ENCODE measurements at regions of chr6 and their contacts with region 1.

Region 1: GRCh38 chr6:130885392-130886192 is 58.4 kb downstream of the SMLR1 start:
- DNase-seq: peak; percentile 77
- H3K4me3 ChIP-seq: no peak overlapping the region
- H3K27ac ChIP-seq: no peak overlapping the region
- H3K4me1 ChIP-seq: peaks cover 0 to 8% (median under 1%) of the 10 kb centered on the region in 4 donors
- H3K27me3 ChIP-seq: no peaks in the 10 kb centered on the region
- CTCF ChIP-seq: peak; percentile 82 to 95 (median 90)
- EP300 ChIP-seq: no peak
- POLR2A ChIP-seq: no peak

Region 2: DNA sequence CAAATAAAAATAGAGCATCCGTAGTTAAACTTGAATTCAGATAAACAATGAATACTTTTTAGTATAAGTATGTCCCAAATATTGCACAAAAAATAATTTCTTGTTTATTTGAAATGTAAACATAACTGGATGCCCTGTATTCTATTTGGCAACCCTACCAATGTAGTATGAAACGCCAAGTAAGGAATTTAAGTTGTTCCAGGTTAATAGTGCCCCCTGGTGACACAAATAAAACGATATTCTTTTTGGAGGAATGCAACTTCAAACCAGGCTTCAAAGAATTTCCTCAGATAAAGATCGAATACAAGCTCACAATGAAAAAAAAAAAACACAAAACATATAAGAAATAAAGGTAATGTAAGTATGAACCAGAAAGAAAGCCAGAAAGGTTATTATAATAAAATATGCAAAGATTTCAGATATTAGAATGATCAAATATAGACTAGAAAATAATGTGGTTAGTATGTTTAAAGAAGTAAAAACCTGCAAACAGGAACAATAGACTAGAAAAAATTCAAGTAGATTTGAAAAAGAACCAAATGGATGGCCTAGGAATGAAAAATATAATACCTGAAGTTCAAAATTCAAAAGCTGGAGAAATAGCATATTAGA is 231.3 kb after region 1 on chr6:
- in situ Hi-C with region 1: loop called (anchors 5 to 10 kb)
- intact Hi-C with region 1: loop called (anchors 2 kb)
- DNase-seq: no peak
- H3K4me3 ChIP-seq: no peak overlapping the region
- H3K27ac ChIP-seq: no peak overlapping the region
- H3K4me1 ChIP-seq: peaks cover 0 to 10% (median 0%) of the 10 kb centered on the region in 4 donors
- H3K27me3 ChIP-seq: no peaks in the 10 kb centered on the region
- CTCF ChIP-seq: peak; percentile 49 to 74 (median 59)
- EP300 ChIP-seq: no peak
- POLR2A ChIP-seq: no peak

Region 3: DNA sequence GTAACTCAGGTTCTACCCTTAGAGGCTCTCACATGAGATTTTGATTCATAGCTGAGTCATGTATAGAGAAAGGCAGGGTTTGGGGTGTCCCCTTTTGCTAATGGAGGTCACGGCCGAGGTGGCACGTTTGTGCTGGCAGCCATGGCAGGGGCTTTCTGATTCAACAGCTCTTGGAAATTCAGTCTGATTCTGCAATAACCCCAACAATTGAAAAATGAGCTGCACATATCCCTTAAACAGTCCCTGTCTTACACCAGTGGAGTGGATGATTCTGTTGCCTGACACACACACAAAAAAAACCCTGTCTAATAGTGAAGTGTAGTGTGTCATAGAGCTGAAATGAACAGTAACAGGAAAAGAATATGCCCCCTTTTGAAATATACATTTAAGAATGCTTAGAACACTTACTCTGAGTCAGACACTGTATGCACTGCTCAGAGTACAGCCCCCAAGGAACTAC is 647.0 kb after region 1 on chr6:
- in situ Hi-C with region 1: loop called in 3 of 4 experiments (anchors 10 to 25 kb)
- intact Hi-C with region 1: no loop called
- DNase-seq: no peak
- H3K4me3 ChIP-seq: no peak overlapping the region
- H3K27ac ChIP-seq: no peak overlapping the region
- H3K4me1 ChIP-seq: peaks cover 0 to 7% (median 0%) of the 10 kb centered on the region in 4 donors
- H3K27me3 ChIP-seq: no peaks in the 10 kb centered on the region
- CTCF ChIP-seq: no peak
- EP300 ChIP-seq: no peak
- POLR2A ChIP-seq: no peak

Region 4: DNA sequence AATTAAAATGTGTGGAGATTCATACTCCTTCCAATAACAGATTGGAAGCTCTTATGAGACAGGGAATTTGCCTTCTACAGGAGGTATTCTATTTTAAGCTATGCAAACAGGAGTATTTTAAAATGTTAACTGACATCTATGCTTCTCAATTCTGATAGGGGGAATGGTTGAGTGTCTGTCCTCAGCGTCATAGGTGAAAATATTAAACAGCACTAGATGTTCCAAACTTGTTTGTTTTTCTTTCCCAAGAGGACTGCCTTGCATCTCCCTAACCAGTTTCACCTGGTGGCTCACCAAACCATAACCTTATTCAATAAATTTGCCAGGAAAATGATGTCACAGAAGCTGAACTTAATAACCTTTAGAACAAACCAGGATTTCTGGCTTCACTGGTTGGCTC is 662.8 kb after region 1 on chr6:
- in situ Hi-C with region 1: loop called in 3 of 4 experiments (anchors 10 to 25 kb)
- intact Hi-C with region 1: no loop called
- DNase-seq: no peak
- H3K4me3 ChIP-seq: no peak overlapping the region
- H3K27ac ChIP-seq: no peak overlapping the region
- H3K4me1 ChIP-seq: no peaks in the 10 kb centered on the region
- H3K27me3 ChIP-seq: no peaks in the 10 kb centered on the region
- CTCF ChIP-seq: no peak
- EP300 ChIP-seq: no peak
- POLR2A ChIP-seq: no peak

Region 5: DNA sequence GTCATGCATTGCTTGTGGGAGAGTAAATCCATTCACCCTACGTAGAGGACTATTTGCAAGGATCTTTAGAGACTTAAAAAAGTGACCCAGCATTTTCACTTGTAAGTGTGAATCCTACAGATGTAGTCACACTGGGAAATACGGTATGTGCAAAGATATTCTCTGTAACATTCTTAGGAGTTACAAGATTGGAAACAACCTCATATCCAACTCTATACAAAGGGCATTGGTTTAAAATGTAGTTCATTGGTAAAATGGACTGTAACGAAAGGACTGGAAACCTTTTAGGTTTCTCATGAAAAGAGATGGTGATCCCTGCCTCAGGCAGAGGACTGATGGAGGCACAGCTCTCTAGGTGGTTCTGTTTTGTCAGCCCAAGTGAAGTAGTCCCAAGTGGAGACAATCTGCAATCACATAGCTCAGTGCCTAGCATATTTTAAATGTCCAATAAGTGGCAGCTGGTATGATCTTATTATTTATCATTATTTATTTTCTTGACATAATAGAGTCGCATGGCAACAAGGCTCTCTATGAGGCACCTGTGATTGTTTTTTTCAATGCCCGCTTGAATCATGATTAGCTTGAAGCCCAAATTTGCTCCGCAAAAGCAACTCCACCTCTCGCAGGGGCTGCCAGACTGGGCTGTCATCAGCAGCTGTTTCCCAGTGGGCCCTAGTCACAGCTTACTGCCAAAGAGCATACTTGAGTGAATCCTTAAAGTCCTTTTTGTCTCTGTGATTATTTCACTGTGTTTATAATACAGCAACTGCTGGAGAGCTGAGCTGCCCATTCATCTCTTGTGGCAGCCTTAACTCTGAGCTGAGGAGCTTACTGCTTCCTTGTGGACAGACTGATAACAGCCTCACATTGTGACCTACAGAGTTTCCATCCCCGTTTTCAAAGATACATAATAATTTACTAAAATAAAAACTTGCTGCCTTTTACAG is 902.4 kb after region 1 on chr6:
- in situ Hi-C with region 1: no loop called
- intact Hi-C with region 1: no loop called
- DNase-seq: no peak
- H3K4me3 ChIP-seq: no peak overlapping the region
- H3K27ac ChIP-seq: no peak overlapping the region
- H3K4me1 ChIP-seq: no peaks in the 10 kb centered on the region
- H3K27me3 ChIP-seq: no peaks in the 10 kb centered on the region
- CTCF ChIP-seq: peak in 1 of 5 experiments; percentile 4
- EP300 ChIP-seq: no peak
- POLR2A ChIP-seq: no peak